HepG2 (cell line): ENCODE measurements at regions of chr18 and their contacts with region 1.

Region 1: GRCh38 chr18:54946149-54946581 is 13.1 kb downstream of the CCDC68 start:
- DNase-seq: peak; percentile 93
- ATAC-seq: peak; percentile 83
- H3K4me3 ChIP-seq: peak overlapping the region; percentile 36 to 49 (median 44)
- H3K27ac ChIP-seq: peak overlapping the region; percentile 85
- H3K4me1 ChIP-seq: peaks cover 60% of the 10 kb centered on the region
- H3K27me3 ChIP-seq: no peaks in the 10 kb centered on the region
- CTCF ChIP-seq: peak; percentile 29; the same call in 1 of the 2 replicates
- EP300 ChIP-seq: peak in 1 of 2 experiments; percentile 90; a peak in 3 of 4 replicates
- POLR2A ChIP-seq: no peak
- RAD21 ChIP-seq: 0 out of 2 replicates have a peak, but pooled peaks have one; percentile 28

Region 2: DNA sequence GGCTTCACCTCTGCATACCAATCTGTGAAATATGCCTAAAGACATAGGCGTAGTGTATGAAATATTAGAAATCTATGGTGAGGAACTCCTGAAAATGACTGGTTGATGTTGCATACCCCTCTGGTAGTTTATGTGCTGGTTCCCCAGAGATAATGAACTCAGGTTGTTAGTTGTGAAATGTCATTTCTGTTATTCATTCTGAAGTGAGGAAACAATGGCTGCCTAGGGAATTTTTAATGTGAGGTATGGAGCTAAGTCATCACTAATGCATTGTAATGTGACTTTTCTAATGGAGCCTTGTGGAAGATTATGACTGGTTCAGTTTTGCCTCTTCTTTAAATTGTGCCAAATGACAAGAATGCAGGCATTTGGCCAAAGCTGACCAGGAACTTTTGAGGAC is 179.5 kb before region 1 on chr18:
- CTCF ChIA-PET with region 1: no interaction called
- POLR2A ChIA-PET with region 1: no interaction called
- in situ Hi-C with region 1: no loop called
- intact Hi-C with region 1: loop called (anchors 10 kb)
- DNase-seq: no peak
- ATAC-seq: no peak
- H3K4me3 ChIP-seq: no peak overlapping the region
- H3K27ac ChIP-seq: no peak overlapping the region
- H3K4me1 ChIP-seq: peaks cover 21% of the 10 kb centered on the region
- H3K27me3 ChIP-seq: no peaks in the 10 kb centered on the region
- CTCF ChIP-seq: no peak
- EP300 ChIP-seq: no peak
- POLR2A ChIP-seq: no peak
- RAD21 ChIP-seq: no peak

Region 3: DNA sequence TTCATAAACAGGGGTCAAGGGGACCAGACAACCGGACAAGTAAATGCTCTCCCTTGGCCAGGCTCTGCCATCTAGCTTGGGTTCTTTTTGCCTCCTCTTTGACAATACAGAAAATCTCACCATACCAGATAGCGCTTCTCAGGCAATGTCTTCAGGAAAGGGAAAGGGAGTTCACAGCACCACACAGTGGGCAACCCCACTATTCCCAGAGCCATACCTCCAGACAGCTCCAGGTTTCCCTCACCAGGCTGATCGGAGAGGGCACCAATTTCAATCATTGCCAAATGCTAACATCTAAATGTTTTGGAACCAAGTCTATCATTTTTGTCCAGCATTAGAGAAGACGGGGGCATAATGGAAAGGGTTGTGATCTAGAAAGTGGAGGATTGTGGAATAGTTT is 15.0 kb before region 1 on chr18:
- CTCF ChIA-PET with region 1: no interaction called
- POLR2A ChIA-PET with region 1: no interaction called
- in situ Hi-C with region 1: no loop called
- intact Hi-C with region 1: loop called (anchors 1 kb)
- DNase-seq: no peak
- ATAC-seq: no peak
- H3K4me3 ChIP-seq: no peak overlapping the region
- H3K27ac ChIP-seq: no peak overlapping the region
- H3K4me1 ChIP-seq: peaks cover 33% of the 10 kb centered on the region
- H3K27me3 ChIP-seq: no peaks in the 10 kb centered on the region
- CTCF ChIP-seq: no peak
- EP300 ChIP-seq: no peak
- POLR2A ChIP-seq: no peak
- RAD21 ChIP-seq: no peak

Region 4: DNA sequence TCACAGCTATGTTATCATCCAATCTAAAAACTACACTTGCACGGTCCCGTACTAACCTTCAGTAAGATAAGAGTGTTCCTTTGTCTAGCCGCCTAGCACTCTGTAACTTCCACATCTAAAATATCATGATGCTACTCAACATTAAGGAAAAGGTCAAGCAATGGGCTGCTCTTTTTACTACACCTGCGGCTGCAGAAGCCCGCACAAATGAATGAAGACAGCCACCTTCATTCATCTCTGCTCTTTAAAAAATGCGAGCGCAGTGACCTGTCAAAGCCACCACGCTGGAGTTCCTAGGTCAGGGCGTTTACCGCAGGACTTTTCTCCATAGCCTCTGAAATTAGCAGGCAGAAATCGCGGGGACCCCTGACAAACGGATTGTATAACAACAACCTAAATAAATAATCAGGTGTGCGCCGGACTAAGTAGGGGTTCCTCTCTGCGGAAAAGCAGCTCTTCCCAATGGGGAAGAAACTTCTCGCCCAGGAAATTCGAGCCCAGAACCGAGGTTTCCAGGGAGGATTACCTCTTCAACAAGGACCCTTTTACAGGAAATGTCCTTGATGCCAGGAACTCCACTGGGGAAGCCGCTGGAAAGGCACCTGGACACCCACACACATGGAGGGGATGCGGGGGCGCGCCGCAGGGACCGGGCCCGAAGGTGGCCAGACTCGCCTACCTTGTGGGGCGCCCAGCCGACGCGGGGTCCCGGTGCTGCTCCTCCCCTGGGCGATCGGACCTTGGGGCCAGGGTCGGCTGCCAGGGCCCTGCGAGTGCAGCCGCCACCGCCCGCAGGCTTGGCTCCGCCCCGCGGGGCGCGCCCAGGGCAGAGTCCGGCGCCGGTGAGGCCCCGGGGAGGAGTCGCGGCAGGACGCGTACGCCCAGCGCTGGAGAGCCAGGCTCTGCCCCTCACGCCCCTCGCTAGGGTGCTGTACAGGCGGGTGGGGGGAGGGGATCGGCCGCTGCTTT is 12.8 kb after region 1 on chr18 and contains the start of gene CCDC68:
- CTCF ChIA-PET with region 1: no interaction called
- POLR2A ChIA-PET with region 1: no interaction called
- in situ Hi-C with region 1: no loop called
- intact Hi-C with region 1: loop called (anchors 1 kb)
- DNase-seq: peak; percentile 50
- ATAC-seq: peak; percentile 100
- H3K4me3 ChIP-seq: peak within 1 kb of the TSS; percentile 71 to 81 (median 79)
- H3K27ac ChIP-seq: peak within 1 kb of the TSS; percentile 69
- H3K4me1 ChIP-seq: peaks cover 44% of the 10 kb centered on the region
- H3K27me3 ChIP-seq: peaks cover 0 to 3% of the 10 kb centered on the region in 2 experiments; a peak in 1 of 5 replicates
- CTCF ChIP-seq: no peak
- EP300 ChIP-seq: peak in 1 of 2 experiments; percentile 37; a peak in 1 of 4 replicates
- POLR2A ChIP-seq: peak in 1 of 2 experiments; percentile 77; a peak in 2 of 4 replicates
- RAD21 ChIP-seq: peak; percentile 30
- total RNA-seq, gene CCDC68: 4.6 and 4.9 TPM in 2 replicates

Region 5: GRCh38 chr18:55018602-55019001 is 72.4 kb after region 1 on chr18:
- CTCF ChIA-PET with region 1: no interaction called
- POLR2A ChIA-PET with region 1: no interaction called
- in situ Hi-C with region 1: no loop called
- intact Hi-C with region 1: no loop called
- DNase-seq: no peak
- ATAC-seq: no peak
- H3K4me3 ChIP-seq: no peak overlapping the region
- H3K27ac ChIP-seq: no peak overlapping the region
- H3K4me1 ChIP-seq: no peaks in the 10 kb centered on the region
- H3K27me3 ChIP-seq: no peaks in the 10 kb centered on the region
- CTCF ChIP-seq: no peak
- EP300 ChIP-seq: no peak
- POLR2A ChIP-seq: no peak
- RAD21 ChIP-seq: no peak